Breast epithelium (tissue), 4 donors: ENCODE measurements at regions of chr7 and their contacts with region 1.

Region 1: GRCh38 chr7:147711447-147711846 is 879.1 kb upstream of the C7orf33 start:
- DNase-seq: no peak
- H3K4me3 ChIP-seq: no peak overlapping the region
- H3K27ac ChIP-seq: no peak overlapping the region
- H3K4me1 ChIP-seq: no peaks in the 10 kb centered on the region
- H3K27me3 ChIP-seq: no peaks in the 10 kb centered on the region
- CTCF ChIP-seq: no peak
- POLR2A ChIP-seq: no peak

Region 2: GRCh38 chr7:147756300-147756699 is 44.9 kb after region 1 on chr7:
- intact Hi-C with region 1: loop called (anchors 2 kb)
- DNase-seq: no peak
- H3K4me3 ChIP-seq: no peak overlapping the region
- H3K27ac ChIP-seq: no peak overlapping the region
- H3K4me1 ChIP-seq: no peaks in the 10 kb centered on the region
- H3K27me3 ChIP-seq: no peaks in the 10 kb centered on the region
- CTCF ChIP-seq: no peak
- POLR2A ChIP-seq: no peak